GM12878 (cell line): ENCODE measurements at regions of chr20 and their contacts with region 1.

Region 1: GRCh38 chr20:53828682-53829254 is 235.1 kb upstream of the ZNF217 start:
- DNase-seq: no peak
- ATAC-seq: peak; percentile 2; the same call in 2 of the 3 replicates
- H3K4me3 ChIP-seq: peak overlapping the region; percentile 56
- H3K27ac ChIP-seq: peak overlapping the region; percentile 91
- H3K4me1 ChIP-seq: peaks cover 37% of the 10 kb centered on the region
- H3K27me3 ChIP-seq: no peaks in the 10 kb centered on the region
- CTCF ChIP-seq: 0 out of 6 replicates have a peak, but pooled peaks of 1 of the 3 experiments have one; percentile 4
- EP300 ChIP-seq: no peak
- POLR2A ChIP-seq: no peak
- RAD21 ChIP-seq: 0 out of 2 replicates have a peak, but pooled peaks have one; percentile 1

Region 2: GRCh38 chr20:53660078-53660909 is 168.5 kb before region 1 on chr20:
- CTCF ChIA-PET with region 1: interaction called, 3 read pairs
- POLR2A ChIA-PET with region 1: interaction called, 3 read pairs
- RAD21 ChIA-PET with region 1: no interaction called
- SMC1A ChIA-PET with region 1: interaction called, 5 read pairs
- in situ Hi-C with region 1: no loop called
- intact Hi-C with region 1: loop called (anchors 5 kb)
- DNase-seq: no peak
- ATAC-seq: peak; percentile 27
- H3K4me3 ChIP-seq: peak overlapping the region; percentile 63
- H3K27ac ChIP-seq: peak overlapping the region; percentile 84
- H3K4me1 ChIP-seq: peaks cover 61% of the 10 kb centered on the region
- H3K27me3 ChIP-seq: no peaks in the 10 kb centered on the region
- CTCF ChIP-seq: no peak
- EP300 ChIP-seq: no peak; a peak in 1 of 4 replicates
- POLR2A ChIP-seq: peak; percentile 41; the same call in 1 of the 2 replicates
- RAD21 ChIP-seq: 0 out of 2 replicates have a peak, but pooled peaks have one; percentile 4

Region 3: DNA sequence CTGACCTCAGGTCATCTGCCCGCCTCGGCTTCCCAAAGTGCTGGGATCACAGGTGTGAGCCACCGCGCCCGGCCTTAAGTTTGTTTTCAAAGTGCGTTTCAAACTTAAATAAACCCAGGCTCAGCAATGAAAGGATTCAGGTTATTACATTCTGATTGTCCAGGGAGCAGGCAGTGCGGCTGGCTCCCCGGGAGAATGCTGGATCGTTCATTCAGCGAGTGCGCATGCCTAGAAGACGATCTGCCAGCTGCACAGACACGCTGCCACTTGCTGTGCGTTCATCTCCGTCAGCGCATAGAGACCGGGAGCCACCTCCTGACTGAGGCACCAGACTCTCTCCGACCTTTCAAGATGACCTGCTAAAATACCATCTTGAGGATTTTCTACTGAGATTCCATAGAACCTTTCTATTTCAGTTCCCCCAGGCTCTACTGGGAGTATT is 71.3 kb before region 1 on chr20:
- CTCF ChIA-PET with region 1: interaction called, 5 read pairs
- POLR2A ChIA-PET with region 1: interaction called, 4 read pairs
- RAD21 ChIA-PET with region 1: interaction called, 26 read pairs
- SMC1A ChIA-PET with region 1: interaction called, 23 read pairs
- in situ Hi-C with region 1: no loop called
- intact Hi-C with region 1: no loop called
- DNase-seq: no peak
- ATAC-seq: no peak
- H3K4me3 ChIP-seq: no peak overlapping the region
- H3K27ac ChIP-seq: no peak overlapping the region
- H3K4me1 ChIP-seq: peaks cover 28% of the 10 kb centered on the region
- H3K27me3 ChIP-seq: no peaks in the 10 kb centered on the region
- CTCF ChIP-seq: no peak
- EP300 ChIP-seq: no peak
- POLR2A ChIP-seq: no peak
- RAD21 ChIP-seq: no peak

Region 4: GRCh38 chr20:53815509-53815908 is 13.3 kb before region 1 on chr20:
- CTCF ChIA-PET with region 1: interaction called, 4 read pairs
- POLR2A ChIA-PET with region 1: interaction called, 6 read pairs
- RAD21 ChIA-PET with region 1: interaction called, 8 read pairs
- SMC1A ChIA-PET with region 1: interaction called, 18 read pairs
- in situ Hi-C with region 1: no loop called
- intact Hi-C with region 1: no loop called
- DNase-seq: no peak
- ATAC-seq: peak; percentile 38; the same call in 1 of the 3 replicates
- H3K4me3 ChIP-seq: no peak overlapping the region
- H3K27ac ChIP-seq: peak overlapping the region; percentile 13; the same call in 1 of the 2 replicates
- H3K4me1 ChIP-seq: peaks cover 18% of the 10 kb centered on the region
- H3K27me3 ChIP-seq: no peaks in the 10 kb centered on the region
- CTCF ChIP-seq: no peak
- EP300 ChIP-seq: no peak
- POLR2A ChIP-seq: no peak
- RAD21 ChIP-seq: no peak

Region 5: DNA sequence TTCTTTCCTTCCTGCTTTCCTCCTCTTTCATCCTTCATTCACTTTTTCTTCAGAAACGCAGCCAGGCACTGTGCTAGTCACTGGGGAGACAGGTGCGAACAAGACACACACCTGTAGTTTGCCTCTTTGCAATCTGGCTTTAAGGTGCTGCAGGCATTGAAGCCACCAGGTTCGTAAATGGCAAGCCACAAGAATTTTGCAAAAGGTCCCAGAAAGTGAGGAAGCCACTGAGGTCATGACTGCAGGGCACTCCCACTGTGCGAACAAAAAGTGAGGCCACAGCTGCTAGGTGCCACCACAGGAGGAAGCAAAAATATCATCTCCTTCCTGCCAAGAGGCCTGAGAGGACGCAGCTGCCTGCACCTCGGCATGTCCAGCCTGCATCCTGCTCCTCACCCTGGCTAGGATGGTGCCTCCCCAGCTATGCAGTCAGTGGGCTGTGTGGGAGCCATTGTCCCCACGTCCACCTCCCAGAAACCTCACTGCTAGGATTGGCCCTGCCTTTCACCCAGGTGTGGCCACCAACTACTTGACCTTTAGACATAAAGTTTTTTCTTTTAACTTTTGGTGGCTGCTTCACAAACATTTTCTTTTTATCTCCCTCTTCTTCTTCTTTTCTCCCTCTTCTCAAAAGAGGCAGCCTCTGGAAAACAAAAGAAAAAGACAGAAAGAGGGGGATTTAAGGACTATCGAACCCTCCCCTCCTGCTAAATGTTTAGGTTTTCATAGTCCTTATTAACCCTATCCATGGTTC is 10.8 kb after region 1 on chr20:
- CTCF ChIA-PET with region 1: interaction called, 4 read pairs
- POLR2A ChIA-PET with region 1: interaction called, 14 read pairs
- RAD21 ChIA-PET with region 1: interaction called, 18 read pairs
- SMC1A ChIA-PET with region 1: interaction called, 16 read pairs
- in situ Hi-C with region 1: no loop called
- intact Hi-C with region 1: no loop called
- DNase-seq: peak; percentile 96
- ATAC-seq: peak; percentile 78
- H3K4me3 ChIP-seq: no peak overlapping the region
- H3K27ac ChIP-seq: peak overlapping the region; percentile 70
- H3K4me1 ChIP-seq: peaks cover 47% of the 10 kb centered on the region
- H3K27me3 ChIP-seq: no peaks in the 10 kb centered on the region
- CTCF ChIP-seq: no peak
- EP300 ChIP-seq: peak; percentile 39 to 54; a peak in 2 of 4 replicates
- POLR2A ChIP-seq: peak; percentile 53; the same call in 1 of the 2 replicates
- RAD21 ChIP-seq: 0 out of 2 replicates have a peak, but pooled peaks have one; percentile 3

Region 6: DNA sequence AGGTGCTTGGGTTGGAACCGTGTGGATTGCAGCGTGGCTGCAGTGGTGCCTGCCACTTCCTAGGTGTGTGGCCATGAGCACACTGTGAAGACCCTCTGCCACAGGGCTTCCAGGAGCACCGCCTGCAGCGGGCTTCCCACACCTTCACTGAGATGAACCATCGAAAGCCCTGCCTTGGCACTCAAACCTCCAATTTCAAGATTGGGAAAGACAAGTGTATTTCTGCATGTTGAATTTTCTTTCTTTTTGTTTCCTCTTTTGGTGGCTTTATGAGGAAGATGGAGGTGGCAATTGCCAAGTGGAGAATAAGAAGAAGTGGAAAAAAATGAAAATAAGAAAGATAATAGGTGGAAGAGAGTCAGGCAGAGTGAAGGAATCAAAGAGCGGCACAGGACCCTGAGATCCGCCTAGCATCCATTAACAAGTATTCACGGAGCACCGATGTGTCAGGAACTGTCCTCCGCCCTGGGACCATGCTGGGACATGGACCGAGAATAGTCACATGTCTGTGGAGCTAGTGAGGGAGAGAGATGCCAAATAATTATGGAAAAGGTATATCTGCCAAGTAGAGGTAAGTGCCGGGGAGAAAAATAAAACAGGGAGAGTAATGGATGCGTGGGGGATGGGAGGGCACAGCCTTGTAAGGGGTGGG is 81.7 kb after region 1 on chr20:
- CTCF ChIA-PET with region 1: interaction called, 7 read pairs
- POLR2A ChIA-PET with region 1: interaction called, 3 read pairs
- RAD21 ChIA-PET with region 1: interaction called, 6 read pairs
- SMC1A ChIA-PET with region 1: interaction called, 20 read pairs
- in situ Hi-C with region 1: no loop called
- intact Hi-C with region 1: no loop called
- DNase-seq: no peak
- ATAC-seq: no peak
- H3K4me3 ChIP-seq: no peak overlapping the region
- H3K27ac ChIP-seq: no peak overlapping the region
- H3K4me1 ChIP-seq: peaks cover 27% of the 10 kb centered on the region
- H3K27me3 ChIP-seq: no peaks in the 10 kb centered on the region
- CTCF ChIP-seq: no peak
- EP300 ChIP-seq: no peak
- POLR2A ChIP-seq: no peak
- RAD21 ChIP-seq: no peak

Region 7: GRCh38 chr20:54048481-54048880 is 219.7 kb after region 1 on chr20:
- CTCF ChIA-PET with region 1: no interaction called
- POLR2A ChIA-PET with region 1: no interaction called
- RAD21 ChIA-PET with region 1: no interaction called
- SMC1A ChIA-PET with region 1: no interaction called
- in situ Hi-C with region 1: no loop called
- intact Hi-C with region 1: no loop called
- DNase-seq: no peak
- ATAC-seq: no peak
- H3K4me3 ChIP-seq: no peak overlapping the region
- H3K27ac ChIP-seq: no peak overlapping the region
- H3K4me1 ChIP-seq: peaks cover 11% of the 10 kb centered on the region
- H3K27me3 ChIP-seq: no peaks in the 10 kb centered on the region
- CTCF ChIP-seq: no peak
- EP300 ChIP-seq: no peak
- POLR2A ChIP-seq: no peak
- RAD21 ChIP-seq: no peak